Esophagus squamous epithelium (tissue), 5 donors: ENCODE measurements at regions of chr3 and their contacts with region 1.

Region 1: GRCh38 chr3:190205739-190206138 is 85.0 kb upstream of the P3H2 start:
- DNase-seq: no peak
- H3K4me3 ChIP-seq: no peak overlapping the region
- H3K27ac ChIP-seq: no peak overlapping the region
- H3K4me1 ChIP-seq: peaks cover 0 to 3% (median 0%) of the 10 kb centered on the region in 3 donors
- H3K27me3 ChIP-seq: no peaks in the 10 kb centered on the region
- CTCF ChIP-seq: no peak
- POLR2A ChIP-seq: no peak

Region 2: GRCh38 chr3:189961525-189962161 is 244.1 kb before region 1 on chr3:
- intact Hi-C with region 1: loop called (anchors 5 kb)
- DNase-seq: no peak
- H3K4me3 ChIP-seq: no peak overlapping the region
- H3K27ac ChIP-seq: peak overlapping the region in 3 of 4 donors; percentile 21 to 63 (median 30)
- H3K4me1 ChIP-seq: peaks cover 0 to 13% (median 3%) of the 10 kb centered on the region in 3 donors
- H3K27me3 ChIP-seq: no peaks in the 10 kb centered on the region
- CTCF ChIP-seq: peak; percentile 55 to 97 (median 92)
- POLR2A ChIP-seq: no peak

Region 3: DNA sequence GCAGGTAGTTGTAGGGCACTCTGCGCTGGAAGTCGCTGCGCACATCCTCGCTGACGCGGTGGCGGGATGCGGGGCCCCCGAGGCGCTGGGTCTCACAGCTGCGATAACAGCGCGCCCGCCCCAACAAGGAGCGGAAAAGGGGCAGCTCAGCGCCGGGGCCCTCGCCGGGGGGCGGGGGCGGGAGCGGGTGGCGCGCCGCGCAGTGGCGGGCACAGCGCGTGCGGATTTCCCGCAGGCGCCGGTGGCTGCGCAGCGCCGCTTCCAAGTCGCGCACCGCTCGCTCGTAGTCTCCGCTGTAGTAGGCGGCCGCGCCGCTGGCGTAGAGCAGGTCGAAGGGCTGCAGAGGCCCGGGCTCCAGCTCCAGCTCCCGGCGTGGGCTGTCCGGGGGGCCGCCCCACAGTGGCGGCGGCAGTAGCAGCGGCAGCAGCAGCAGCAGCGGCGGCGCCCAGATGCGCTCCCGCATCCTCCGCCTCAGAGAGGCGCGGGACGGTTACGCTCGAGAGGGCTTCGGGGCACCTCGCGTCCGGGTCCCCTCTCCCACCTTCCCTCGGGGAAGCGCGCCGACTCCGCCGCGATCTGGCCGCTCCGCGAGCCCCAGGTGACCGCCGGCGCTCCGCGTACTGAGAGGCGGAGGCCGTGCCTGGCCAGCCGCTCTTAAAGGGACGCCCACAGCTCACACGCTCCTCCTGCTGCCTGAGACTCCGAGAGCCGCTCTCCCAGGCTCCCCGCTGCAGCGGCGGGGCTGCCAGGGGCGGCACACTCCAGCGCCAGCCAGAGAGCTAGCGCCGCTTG is 85.3 kb before region 1 on chr3 and contains the start of gene P3H2:
- intact Hi-C with region 1: loop called (anchors 10 kb)
- DNase-seq: no peak
- H3K4me3 ChIP-seq: peak within 1 kb of the TSS; percentile 68 to 95 (median 76)
- H3K27ac ChIP-seq: peak within 1 kb of the TSS; percentile 81 to 90 (median 86)
- H3K4me1 ChIP-seq: peaks cover 7 to 58% (median 9%) of the 10 kb centered on the region in 3 donors
- H3K27me3 ChIP-seq: peaks cover 0 to 9% (median 0%) of the 10 kb centered on the region in 4 donors
- CTCF ChIP-seq: peak in 5 of 6 experiments; percentile 35 to 54 (median 44)
- POLR2A ChIP-seq: peak in 1 of 4 donors; percentile 50
- total RNA-seq, gene P3H2: 16.5 to 41.2 (median 34.0) TPM

Region 4: GRCh38 chr3:191065181-191065805 is 859.6 kb after region 1 on chr3:
- intact Hi-C with region 1: no loop called
- DNase-seq: no peak
- H3K4me3 ChIP-seq: no peak overlapping the region
- H3K27ac ChIP-seq: no peak overlapping the region
- H3K4me1 ChIP-seq: no peaks in the 10 kb centered on the region
- H3K27me3 ChIP-seq: no peaks in the 10 kb centered on the region
- CTCF ChIP-seq: no peak
- POLR2A ChIP-seq: no peak